ENCODE measurements at regions of chr19 and their contacts with region 1.

Region 1: GRCh38 chr19:18450931-18451845 is 13.3 kb upstream of the ISYNA1 start:
- DNase-seq: peak; percentile 80 to 87 (median 82)
- H3K4me3 ChIP-seq: no peak overlapping the region
- H3K4me3 Mint-ChIP-seq: peak overlapping the region in 1 of 8 donors; percentile 35
- H3K27ac ChIP-seq: no peak overlapping the region
- H3K27ac Mint-ChIP-seq: peak overlapping the region in 5 of 7 donors; percentile 22 to 77 (median 70)
- H3K4me1 ChIP-seq: peaks cover 5% of the 10 kb centered on the region
- H3K4me1 Mint-ChIP-seq: peaks cover 3 to 19% (median 7%) of the 10 kb centered on the region in 4 donors
- H3K27me3 ChIP-seq: no peaks in the 10 kb centered on the region
- H3K27me3 Mint-ChIP-seq: no peaks in the 10 kb centered on the region

Region 2: DNA sequence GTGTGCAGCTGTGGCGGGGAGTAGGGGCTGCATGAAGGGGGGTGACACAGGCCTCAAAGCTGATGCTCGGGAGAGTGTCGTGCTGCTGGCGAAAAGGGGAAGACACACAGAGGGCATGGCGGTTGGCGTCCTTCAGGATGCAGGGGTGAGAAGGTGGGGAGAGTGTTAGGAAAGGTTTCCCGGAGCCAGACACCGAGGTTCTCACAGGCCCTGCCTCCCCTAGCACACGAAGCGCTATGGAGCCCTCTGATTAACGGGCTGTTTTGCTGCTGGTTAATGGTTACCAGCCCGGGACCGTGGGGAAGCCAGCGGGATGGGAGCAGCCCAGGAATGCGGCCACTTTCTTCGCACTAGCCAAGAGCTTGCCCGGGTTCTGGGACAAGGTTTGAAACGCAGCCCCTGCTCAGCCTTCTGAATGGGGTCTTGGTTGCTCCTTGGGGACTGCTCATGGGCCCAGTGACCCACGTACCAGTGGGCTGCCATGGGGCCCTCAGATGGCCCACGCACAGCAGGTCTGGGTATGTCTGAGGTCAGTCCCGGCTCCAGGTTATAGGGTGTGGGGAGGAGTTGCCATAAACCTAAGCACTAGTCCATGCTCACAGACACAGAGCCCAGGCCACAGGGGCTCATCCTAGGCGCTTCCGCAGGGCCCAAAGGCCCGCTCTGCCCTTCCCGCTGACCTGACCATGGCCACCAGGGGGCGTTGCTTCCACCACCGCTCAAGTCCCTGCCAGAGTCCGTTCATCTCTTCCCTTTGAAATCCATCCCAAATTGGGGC is 18.1 kb after region 1 on chr19:
- CTCF ChIA-PET with region 1: interaction called, 26 read pairs
- POLR2A ChIA-PET with region 1: no interaction called
- intact Hi-C with region 1: no loop called
- DNase-seq: peak; percentile 45 to 59 (median 56)
- H3K4me3 ChIP-seq: no peak overlapping the region
- H3K4me3 Mint-ChIP-seq: peak overlapping the region in 1 of 8 donors; percentile 25
- H3K27ac ChIP-seq: no peak overlapping the region
- H3K27ac Mint-ChIP-seq: peak overlapping the region in 6 of 7 donors; percentile 42 to 84 (median 80)
- H3K4me1 ChIP-seq: peaks cover 47% of the 10 kb centered on the region
- H3K4me1 Mint-ChIP-seq: peaks cover 15 to 52% (median 32%) of the 10 kb centered on the region in 4 donors
- H3K27me3 ChIP-seq: no peaks in the 10 kb centered on the region
- H3K27me3 Mint-ChIP-seq: no peaks in the 10 kb centered on the region

Region 3: DNA sequence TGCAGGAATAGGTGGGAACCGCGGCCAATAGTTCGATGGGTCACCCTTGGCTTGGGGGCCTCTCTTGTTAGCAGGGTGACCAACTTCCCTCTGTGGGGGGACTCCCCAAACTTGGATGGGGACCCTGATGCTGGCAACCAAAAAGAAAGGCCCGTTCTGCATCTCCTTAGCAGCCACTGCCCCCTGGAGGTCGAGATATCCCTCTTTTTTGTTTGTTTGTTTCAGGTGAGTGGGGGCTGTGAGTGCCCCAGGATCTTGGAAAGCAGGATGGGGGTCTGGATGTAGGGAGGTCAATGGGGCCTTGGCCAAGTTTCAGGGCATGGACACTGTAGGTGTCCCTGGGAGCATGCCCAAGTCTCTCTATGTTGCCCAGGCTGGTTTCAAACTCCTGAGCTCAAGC is 224.6 kb after region 1 on chr19:
- CTCF ChIA-PET with region 1: interaction called, 7 read pairs
- POLR2A ChIA-PET with region 1: no interaction called
- intact Hi-C with region 1: loop called (anchors 1 kb)
- DNase-seq: peak in 2 of 5 donors; percentile 19 to 20
- H3K4me3 ChIP-seq: no peak overlapping the region
- H3K4me3 Mint-ChIP-seq: no peak overlapping the region
- H3K27ac ChIP-seq: no peak overlapping the region
- H3K27ac Mint-ChIP-seq: peak overlapping the region in 1 of 7 donors; percentile 8
- H3K4me1 ChIP-seq: no peaks in the 10 kb centered on the region
- H3K4me1 Mint-ChIP-seq: no peaks in the 10 kb centered on the region
- H3K27me3 ChIP-seq: no peaks in the 10 kb centered on the region
- H3K27me3 Mint-ChIP-seq: no peaks in the 10 kb centered on the region

Region 4: DNA sequence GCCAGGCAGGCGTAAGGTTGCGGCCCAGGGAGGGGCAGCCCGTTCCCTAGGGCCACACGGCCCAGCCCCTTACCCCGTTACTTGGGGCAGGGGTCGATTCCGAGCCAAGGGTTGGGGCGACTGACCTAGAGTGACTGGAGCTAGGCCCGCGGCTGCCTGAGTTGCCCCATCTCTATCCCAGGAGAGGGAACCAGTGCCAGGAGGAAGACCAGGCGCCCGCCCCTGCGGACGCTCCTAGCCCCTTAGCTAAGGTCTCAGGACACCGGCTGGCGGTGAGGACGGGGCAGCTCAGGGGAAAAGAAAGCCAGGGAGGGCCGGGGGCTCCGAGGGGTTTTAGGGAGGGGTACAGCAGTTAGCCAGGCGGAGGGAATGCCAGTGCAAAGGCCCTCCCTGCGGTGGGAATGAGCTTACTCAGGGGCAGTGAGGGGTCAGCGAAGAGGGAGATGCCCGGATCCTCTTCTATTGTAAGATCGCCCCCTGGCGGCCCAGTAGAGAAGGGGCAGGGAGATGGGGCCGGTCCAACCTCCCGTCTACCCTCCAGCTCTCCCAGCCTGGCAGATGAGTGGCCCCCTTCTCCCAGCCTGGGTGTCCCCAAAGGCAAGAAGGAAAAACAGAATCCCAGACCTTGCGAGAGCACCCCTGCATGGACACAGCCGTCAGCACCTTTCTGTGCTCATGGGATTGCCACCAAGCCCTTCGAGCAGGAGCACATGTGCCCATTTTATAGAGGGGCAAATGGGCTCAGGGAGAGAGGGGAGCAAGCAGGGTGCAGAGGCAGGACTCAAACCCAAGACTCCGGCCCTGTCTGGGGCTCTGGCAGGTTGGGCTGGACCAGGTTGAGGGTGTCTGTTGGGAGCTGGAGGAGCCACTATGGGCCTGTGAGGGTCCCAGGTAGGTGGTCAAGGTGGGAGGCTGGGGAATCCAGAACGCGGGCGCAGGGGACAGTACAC is 1103.2 kb after region 1 on chr19:
- CTCF ChIA-PET with region 1: no interaction called
- POLR2A ChIA-PET with region 1: no interaction called
- intact Hi-C with region 1: no loop called
- DNase-seq: peak; percentile 42 to 50 (median 45)
- H3K4me3 ChIP-seq: no peak overlapping the region
- H3K4me3 Mint-ChIP-seq: peak overlapping the region in 1 of 8 donors; percentile 10
- H3K27ac ChIP-seq: no peak overlapping the region
- H3K27ac Mint-ChIP-seq: peak overlapping the region in 1 of 7 donors; percentile 40
- H3K4me1 ChIP-seq: peaks cover 6% of the 10 kb centered on the region
- H3K4me1 Mint-ChIP-seq: peaks cover 10 to 17% (median 12%) of the 10 kb centered on the region in 4 donors
- H3K27me3 ChIP-seq: no peaks in the 10 kb centered on the region
- H3K27me3 Mint-ChIP-seq: no peaks in the 10 kb centered on the region

Measured in CD4-positive, alpha-beta memory T cell (primary cell).